ENCODE measurements at regions of chr17 and their contacts with region 1.

Region 1: GRCh38 chr17:16417896-16418684 is 2.7 kb downstream of the TRPV2 start:
- DNase-seq: no peak

Region 2: DNA sequence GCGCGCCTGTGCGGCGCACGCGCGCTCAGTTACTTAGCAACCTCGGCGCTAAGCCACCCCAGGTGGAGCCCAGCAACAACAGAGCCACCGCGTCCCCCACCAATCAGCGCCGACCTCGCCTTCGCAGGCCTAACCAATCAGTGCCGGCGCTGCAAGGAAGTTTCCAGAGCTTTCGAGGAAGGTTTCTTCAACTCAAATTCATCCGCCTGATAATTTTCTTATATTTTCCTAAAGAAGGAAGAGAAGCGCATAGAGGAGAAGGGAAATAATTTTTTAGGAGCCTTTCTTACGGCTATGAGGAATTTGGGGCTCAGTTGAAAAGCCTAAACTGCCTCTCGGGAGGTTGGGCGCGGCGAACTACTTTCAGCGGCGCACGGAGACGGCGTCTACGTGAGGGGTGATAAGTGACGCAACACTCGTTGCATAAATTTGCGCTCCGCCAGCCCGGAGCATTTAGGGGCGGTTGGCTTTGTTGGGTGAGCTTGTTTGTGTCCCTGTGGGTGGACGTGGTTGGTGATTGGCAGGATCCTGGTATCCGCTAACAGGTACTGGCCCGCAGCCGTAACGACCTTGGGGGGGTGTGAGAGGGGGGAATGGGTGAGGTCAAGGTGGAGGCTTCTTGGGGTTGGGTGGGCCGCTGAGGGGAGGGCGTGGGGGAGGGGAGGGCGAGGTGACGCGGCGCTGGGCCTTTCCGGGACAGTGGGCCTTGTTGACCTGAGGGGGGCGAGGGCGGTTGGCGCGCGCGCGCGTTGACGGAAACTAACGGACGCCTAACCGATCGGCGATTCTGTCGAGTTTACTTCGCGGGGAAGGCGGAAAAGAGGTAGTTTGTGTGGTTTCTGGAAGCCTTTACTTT is 37.2 kb before region 1 on chr17 and contains the start of gene UBB:
- intact Hi-C with region 1: no loop called
- DNase-seq: peak; percentile 99
- total RNA-seq, gene UBB: 581 to 633 TPM

Region 3: DNA sequence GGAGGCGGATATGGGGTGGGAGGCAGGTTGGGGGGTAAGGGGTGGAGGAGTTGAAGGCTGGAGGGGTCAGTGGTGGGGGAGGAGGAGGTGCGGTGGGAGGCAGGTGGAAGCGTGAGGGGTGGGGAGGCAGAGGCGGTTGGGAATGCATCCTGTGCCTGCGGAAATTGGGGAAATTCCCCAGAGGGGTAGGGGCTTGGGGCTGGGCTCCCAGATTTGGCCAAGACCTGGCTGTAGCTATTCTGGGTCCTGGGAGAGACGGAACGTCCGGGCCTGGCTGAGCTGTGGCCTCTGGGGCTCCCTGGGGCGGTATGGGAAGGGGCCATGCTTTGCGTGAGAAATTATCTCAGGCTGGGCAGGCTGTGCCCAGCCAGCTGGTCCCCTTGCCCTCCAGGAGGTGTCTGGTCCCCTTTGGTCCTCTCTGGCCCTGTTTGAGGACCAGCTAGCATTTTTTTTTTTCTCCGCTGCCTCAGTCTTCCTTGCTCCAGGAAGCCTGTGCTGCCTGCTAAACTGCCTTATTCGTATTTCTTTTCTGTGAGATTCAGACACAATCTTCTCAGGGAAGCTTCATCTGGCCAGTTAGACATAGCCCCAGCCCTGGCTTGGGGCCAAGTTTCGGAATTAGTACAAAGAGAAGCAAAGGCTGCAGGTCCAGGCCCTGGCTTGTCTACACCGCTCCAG is 10.0 kb before region 1 on chr17:
- intact Hi-C with region 1: loop called in 1 of 2 experiments (anchors 1 kb)
- DNase-seq: peak; percentile 91

Region 4: GRCh38 chr17:16470265-16470664 is 52.2 kb after region 1 on chr17:
- intact Hi-C with region 1: no loop called
- DNase-seq: no peak

Measured in posterior vena cava (tissue), 2 donors.